RWPE1 (cell line): ENCODE measurements at regions of chr19 and their contacts with region 1.

Region 1: GRCh38 chr19:47013041-47013517 is 6.6 kb upstream of the NPAS1 start:
- DNase-seq: peak; percentile 84
- H3K27ac ChIP-seq: peak overlapping the region; percentile 52
- CTCF ChIP-seq: peak; percentile 97

Region 2: DNA sequence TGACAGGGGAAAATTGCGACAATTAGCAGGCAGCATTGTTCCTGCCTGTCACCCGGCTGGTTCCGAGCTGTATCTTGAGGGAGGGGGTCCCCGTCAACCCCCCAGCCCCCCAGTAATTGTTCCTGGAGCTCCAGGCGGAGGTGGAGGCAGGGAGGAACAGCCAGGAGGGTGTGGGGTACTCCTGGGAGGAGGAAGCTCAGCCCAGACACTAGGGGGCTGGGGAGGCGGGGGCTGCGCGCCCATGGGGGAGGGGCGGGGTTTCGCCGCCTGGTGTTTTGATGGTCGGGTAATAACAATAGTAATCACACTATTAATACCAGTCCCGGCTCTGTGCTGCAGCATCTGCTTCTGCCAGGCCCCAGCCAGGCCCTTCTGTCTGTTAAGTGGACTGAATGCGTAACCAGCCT is 15.1 kb after region 1 on chr19:
- CTCF ChIA-PET with region 1: interaction called, 16 read pairs
- POLR2A ChIA-PET with region 1: no interaction called
- DNase-seq: no peak
- H3K27ac ChIP-seq: no peak overlapping the region
- CTCF ChIP-seq: no peak

Region 3: DNA sequence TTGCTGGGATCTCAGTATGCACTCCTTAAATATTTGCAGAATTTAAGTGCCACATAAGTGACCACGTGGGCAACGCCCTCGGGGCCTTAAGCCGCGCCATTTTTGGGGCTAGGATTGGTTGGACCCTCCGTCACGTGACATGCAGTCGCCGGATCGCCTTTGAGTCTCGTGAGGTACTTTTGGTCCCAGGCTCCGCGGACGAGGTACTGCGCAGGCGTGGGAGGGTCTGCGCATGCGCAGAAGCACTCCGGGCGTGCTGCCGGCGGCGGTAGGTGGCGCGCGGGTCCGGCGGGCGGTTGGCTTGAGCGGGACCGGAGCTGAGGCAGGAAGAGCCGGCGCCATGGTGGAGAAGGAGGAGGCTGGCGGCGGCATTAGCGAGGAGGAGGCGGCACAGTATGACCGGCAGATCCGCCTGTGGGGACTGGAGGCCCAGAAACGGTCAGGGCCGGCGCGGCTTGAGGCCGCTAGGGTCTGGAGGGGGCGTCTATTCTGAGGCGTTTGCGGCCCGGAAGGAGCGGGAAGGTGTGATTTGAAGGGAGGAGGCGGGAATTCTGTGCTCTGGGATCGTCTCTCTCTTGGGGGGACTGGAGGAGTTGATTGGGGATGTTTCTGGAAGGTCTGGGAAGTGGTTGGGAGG is 117.6 kb after region 1 on chr19 and contains the start of gene SAE1:
- CTCF ChIA-PET with region 1: interaction called, 13 read pairs
- POLR2A ChIA-PET with region 1: no interaction called
- DNase-seq: peak; percentile 99
- H3K27ac ChIP-seq: peak within 1 kb of the TSS; percentile 88
- CTCF ChIP-seq: peak; percentile 66

Region 4: DNA sequence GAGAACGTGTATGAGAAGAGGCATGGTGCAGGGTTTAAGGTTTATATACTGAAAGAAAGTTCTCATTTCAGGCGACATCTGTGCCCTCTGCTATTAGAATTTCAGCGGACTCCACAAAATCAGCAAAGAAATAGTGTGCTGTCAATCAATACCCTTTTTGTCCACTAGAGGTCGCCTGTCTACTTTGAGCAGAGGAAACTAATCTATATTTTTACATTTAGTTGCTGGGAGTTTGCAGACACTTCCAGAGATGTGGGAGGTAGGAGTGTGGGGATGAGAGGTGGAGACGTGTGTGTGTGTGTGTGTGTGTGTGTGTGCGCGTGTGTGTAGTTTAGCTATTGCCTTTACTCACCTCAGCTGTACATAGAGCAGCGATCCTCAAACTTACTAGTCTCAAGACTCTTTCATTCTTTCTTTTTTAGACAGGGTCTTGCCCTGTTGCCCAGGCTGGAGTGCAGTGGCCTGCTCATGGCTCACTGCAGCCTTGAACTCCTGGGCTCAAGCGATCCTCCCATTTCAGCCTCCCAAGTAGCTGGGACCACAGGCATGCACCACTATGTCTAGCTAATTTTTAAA is 271.3 kb after region 1 on chr19:
- CTCF ChIA-PET with region 1: no interaction called
- POLR2A ChIA-PET with region 1: no interaction called
- DNase-seq: peak; percentile 17
- H3K27ac ChIP-seq: no peak overlapping the region
- CTCF ChIP-seq: peak; percentile 91

Region 5: GRCh38 chr19:47370045-47370611 is 357.0 kb after region 1 on chr19:
- CTCF ChIA-PET with region 1: no interaction called
- POLR2A ChIA-PET with region 1: no interaction called
- DNase-seq: no peak
- H3K27ac ChIP-seq: peak overlapping the region; percentile 0; the same call in 1 of the 2 replicates
- CTCF ChIP-seq: no peak